ENCODE measurements at regions of chr10 and their contacts with region 1.

Region 1: DNA sequence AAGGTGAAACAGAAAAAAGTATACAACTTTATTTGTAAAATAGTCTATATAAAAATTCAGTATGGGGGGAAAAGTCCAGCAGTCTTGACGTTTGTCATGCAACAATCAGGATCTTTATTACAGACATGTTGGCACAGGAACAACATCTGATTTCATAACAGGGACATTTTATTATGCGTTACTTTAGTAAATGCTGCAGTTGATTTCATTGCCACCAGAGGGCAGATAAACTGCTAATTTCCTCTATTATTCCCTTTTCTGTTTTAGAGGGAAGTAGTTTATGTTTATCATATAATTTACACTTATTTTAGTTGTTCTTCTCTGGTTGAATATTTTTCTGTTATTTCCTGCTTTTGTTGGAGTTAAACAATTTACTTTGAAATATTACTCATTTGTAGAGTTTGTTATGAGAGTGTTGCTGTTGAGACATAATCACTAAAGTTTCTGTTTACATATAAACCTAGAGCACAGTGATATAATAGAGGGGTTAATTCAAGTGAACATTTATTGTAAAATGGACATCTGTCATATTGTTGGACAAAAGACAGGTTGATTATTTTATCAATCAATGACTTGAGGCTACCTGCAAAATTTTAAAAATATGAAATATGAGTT is 3.3 kb downstream of the PLXDC2 start:
- DNase-seq: peak in 1 of 2 experiments; percentile 52
- H3K4me3 ChIP-seq: no peak overlapping the region
- H3K4me3 Mint-ChIP-seq: no peak overlapping the region
- H3K27ac Mint-ChIP-seq: no peak overlapping the region
- H3K4me1 ChIP-seq: no peaks in the 10 kb centered on the region
- H3K4me1 Mint-ChIP-seq: no peaks in the 10 kb centered on the region
- H3K27me3 ChIP-seq: peaks cover 8% of the 10 kb centered on the region
- H3K27me3 Mint-ChIP-seq: peaks cover 17% of the 10 kb centered on the region
- CTCF ChIP-seq: peak; percentile 73 to 83

Region 2: GRCh38 chr10:19563388-19564141 is 256.0 kb before region 1 on chr10:
- CTCF ChIA-PET with region 1: no interaction called
- POLR2A ChIA-PET with region 1: no interaction called
- intact Hi-C with region 1: no loop called
- DNase-seq: no peak
- H3K4me3 ChIP-seq: no peak overlapping the region
- H3K4me3 Mint-ChIP-seq: no peak overlapping the region
- H3K27ac Mint-ChIP-seq: no peak overlapping the region
- H3K4me1 ChIP-seq: no peaks in the 10 kb centered on the region
- H3K4me1 Mint-ChIP-seq: no peaks in the 10 kb centered on the region
- H3K27me3 ChIP-seq: no peaks in the 10 kb centered on the region
- H3K27me3 Mint-ChIP-seq: peaks cover 3% of the 10 kb centered on the region
- CTCF ChIP-seq: no peak

Region 3: GRCh38 chr10:19889256-19889655 is 69.7 kb after region 1 on chr10:
- CTCF ChIA-PET with region 1: no interaction called
- POLR2A ChIA-PET with region 1: no interaction called
- intact Hi-C with region 1: no loop called
- DNase-seq: no peak
- H3K4me3 ChIP-seq: no peak overlapping the region
- H3K4me3 Mint-ChIP-seq: no peak overlapping the region
- H3K27ac Mint-ChIP-seq: no peak overlapping the region
- H3K4me1 ChIP-seq: no peaks in the 10 kb centered on the region
- H3K4me1 Mint-ChIP-seq: no peaks in the 10 kb centered on the region
- H3K27me3 ChIP-seq: no peaks in the 10 kb centered on the region
- H3K27me3 Mint-ChIP-seq: no peaks in the 10 kb centered on the region
- CTCF ChIP-seq: no peak

Region 4: GRCh38 chr10:19911886-19912285 is 92.4 kb after region 1 on chr10:
- CTCF ChIA-PET with region 1: no interaction called
- POLR2A ChIA-PET with region 1: no interaction called
- intact Hi-C with region 1: loop called (anchors 5 kb)
- DNase-seq: no peak
- H3K4me3 ChIP-seq: no peak overlapping the region
- H3K4me3 Mint-ChIP-seq: no peak overlapping the region
- H3K27ac Mint-ChIP-seq: no peak overlapping the region
- H3K4me1 ChIP-seq: no peaks in the 10 kb centered on the region
- H3K4me1 Mint-ChIP-seq: no peaks in the 10 kb centered on the region
- H3K27me3 ChIP-seq: no peaks in the 10 kb centered on the region
- H3K27me3 Mint-ChIP-seq: no peaks in the 10 kb centered on the region
- CTCF ChIP-seq: no peak

Region 5: GRCh38 chr10:20768843-20769242 is 949.3 kb after region 1 on chr10:
- CTCF ChIA-PET with region 1: interaction called, 3 read pairs
- POLR2A ChIA-PET with region 1: no interaction called
- intact Hi-C with region 1: loop called (anchors 1 kb)
- DNase-seq: no peak
- H3K4me3 ChIP-seq: no peak overlapping the region
- H3K4me3 Mint-ChIP-seq: no peak overlapping the region
- H3K27ac Mint-ChIP-seq: no peak overlapping the region
- H3K4me1 ChIP-seq: no peaks in the 10 kb centered on the region
- H3K4me1 Mint-ChIP-seq: no peaks in the 10 kb centered on the region
- H3K27me3 ChIP-seq: no peaks in the 10 kb centered on the region
- H3K27me3 Mint-ChIP-seq: peaks cover 12% of the 10 kb centered on the region
- CTCF ChIP-seq: peak; percentile 19 to 22

Measured in Caco-2 (cell line).